Gastrocnemius medialis (tissue), 4 donors: ENCODE measurements at regions of chr19 and their contacts with region 1.

Region 1: DNA sequence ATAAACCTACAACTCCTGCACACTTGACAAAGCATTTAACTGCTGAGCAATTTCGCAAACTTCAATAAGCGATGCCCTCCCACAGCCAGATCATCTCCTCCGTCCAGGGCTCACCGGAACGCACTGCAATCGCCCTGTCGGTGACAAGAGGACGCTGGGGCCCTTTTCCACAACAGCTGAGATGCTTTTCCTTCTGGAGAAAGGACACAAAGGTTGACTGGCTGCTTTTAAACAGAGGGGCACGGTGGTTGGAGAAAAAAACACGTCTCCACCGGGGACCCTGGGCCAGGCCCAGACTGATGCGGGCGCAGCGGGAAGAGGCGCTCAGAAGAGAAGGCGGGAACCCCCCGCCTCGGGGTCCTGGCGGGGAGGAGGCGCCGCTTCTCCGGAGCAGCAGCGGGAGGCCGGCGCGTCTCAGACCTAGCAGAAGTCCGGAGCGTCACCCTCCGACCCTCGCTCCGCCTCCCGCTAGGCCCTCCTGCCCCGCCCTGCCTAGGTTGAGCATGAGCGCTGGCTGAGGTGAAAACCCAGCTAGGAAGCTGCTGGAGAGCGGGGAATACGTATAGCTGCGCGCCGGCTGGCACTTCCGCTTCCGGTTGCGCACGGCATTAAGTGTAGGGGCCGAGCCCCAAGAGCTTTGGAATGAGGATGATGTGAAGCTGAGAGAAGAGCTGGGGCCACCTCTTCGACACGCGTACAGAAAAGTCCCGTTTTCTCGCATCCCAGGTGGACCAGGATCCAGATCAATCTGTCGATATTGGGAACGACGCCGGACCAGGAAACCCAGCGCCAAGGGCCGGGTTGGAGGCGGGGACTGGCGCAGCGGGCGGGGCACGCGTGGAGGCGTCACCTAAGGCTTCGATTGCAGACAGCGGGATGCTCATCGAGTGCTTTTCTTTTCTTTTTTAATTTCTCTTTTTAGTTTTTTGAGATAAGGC is at the start of gene ZNF846:
- DNase-seq: peak; percentile 78 to 87
- ATAC-seq: peak; percentile 99 to 100
- H3K4me3 ChIP-seq: peak within 1 kb of the TSS; percentile 59 to 92 (median 88)
- H3K27ac ChIP-seq: peak within 1 kb of the TSS; percentile 85 to 91 (median 91)
- H3K4me1 ChIP-seq: peaks cover 7 to 12% of the 10 kb centered on the region in 2 donors
- H3K27me3 ChIP-seq: no peaks in the 10 kb centered on the region
- CTCF ChIP-seq: no peak
- POLR2A ChIP-seq: peak; percentile 29 to 42
- total RNA-seq, gene ZNF846: 0.63 to 5.0 (median 2.1) TPM

Region 2: DNA sequence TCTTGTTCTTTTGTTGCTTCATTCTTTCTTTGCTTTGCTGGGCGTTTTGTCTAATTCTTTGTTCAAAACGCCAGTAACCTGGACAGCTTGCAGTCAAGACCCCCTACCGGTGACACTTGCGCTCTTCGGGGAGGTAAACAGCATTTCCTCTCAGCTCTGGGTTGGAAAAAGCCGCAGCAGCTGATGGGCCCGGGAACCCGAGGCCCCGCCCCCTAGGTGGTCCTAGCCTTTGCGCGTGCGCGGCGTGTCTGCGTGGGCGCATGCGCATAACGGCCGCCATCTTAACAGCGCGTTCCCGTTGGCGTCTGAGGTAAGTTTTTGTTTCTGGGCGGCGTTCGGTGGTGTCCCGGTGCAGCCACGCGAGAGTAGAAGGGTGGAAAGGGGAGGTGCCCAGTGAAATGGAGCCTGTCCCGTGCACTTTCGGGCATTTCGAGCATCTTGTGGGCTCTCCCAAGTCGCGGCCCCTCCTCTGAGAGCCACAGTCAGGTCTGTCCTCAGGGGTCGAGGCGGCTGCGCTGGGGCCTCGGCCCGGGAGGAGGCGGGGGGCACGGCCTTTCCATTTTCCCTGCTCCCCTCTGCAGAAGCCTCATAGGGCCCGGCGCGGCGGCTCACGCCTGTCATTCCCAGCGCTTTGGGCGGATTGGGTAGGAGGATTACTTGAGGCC is 444.4 kb before region 1 on chr19 and contains the start of gene ZNF559:
- in situ Hi-C with region 1: no loop called
- intact Hi-C with region 1: loop called (anchors 10 kb)
- DNase-seq: peak; percentile 60 to 78
- ATAC-seq: peak; percentile 76 to 95
- H3K4me3 ChIP-seq: peak within 1 kb of the TSS; percentile 64 to 80 (median 70)
- H3K27ac ChIP-seq: peak within 1 kb of the TSS; percentile 72 to 79 (median 78)
- H3K4me1 ChIP-seq: peaks cover 0 to 6% of the 10 kb centered on the region in 2 donors
- H3K27me3 ChIP-seq: no peaks in the 10 kb centered on the region
- CTCF ChIP-seq: peak in 2 of 5 experiments; percentile 21 to 26
- POLR2A ChIP-seq: no peak
- total RNA-seq, gene ZNF559: 1.4 to 3.8 (median 3.0) TPM

Region 3: DNA sequence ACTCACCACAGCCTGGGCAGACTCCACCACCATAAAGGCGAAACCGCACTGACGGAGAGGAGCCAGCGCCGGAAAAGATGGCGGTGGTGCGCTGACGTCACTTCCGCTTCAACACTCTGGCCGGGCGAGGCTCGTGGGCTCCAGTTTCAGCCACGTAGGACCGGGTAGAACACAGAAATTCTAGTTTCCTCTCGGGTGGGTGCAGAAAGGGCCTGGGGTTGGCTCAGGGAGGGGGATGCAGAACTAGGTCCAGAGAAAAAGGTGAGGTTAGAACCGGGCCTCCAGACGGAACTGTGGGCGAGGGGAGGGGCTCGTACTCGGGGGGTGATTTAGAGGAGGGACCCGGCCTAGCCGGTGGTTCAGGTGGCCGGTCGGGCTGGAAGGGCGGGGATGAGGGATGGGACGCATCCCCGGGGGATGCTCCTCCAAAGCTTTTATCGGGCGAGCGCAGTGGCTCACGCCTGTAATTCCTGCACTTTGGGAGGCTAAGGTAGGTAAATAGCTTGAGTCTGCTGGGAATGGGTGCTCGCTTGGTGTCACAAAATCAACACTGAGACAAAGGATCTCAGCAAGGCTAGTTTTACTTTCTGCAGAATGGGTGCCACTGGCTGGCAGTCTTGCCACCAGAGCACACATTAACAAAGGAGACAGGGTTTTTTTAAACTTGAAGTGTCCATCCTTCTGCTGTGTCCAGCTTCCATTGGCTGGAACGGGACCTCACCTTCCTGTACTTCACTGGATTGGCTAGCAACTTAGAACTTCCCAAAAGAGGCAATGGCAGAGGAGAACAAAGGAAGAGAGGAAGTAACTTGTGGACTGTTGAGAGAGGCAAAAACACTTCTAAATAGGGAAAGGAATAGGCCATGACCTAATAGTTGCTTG is 147.0 kb before region 1 on chr19 and contains the start of gene ZNF561:
- in situ Hi-C with region 1: loop called in 2 of 4 experiments (anchors 10 to 25 kb)
- intact Hi-C with region 1: loop called (anchors 1 kb)
- DNase-seq: peak; percentile 70
- ATAC-seq: peak; percentile 96 to 98
- H3K4me3 ChIP-seq: peak within 1 kb of the TSS; percentile 70 to 96 (median 86)
- H3K27ac ChIP-seq: peak within 1 kb of the TSS; percentile 82 to 92 (median 90)
- H3K4me1 ChIP-seq: peaks cover 14 to 22% of the 10 kb centered on the region in 2 donors
- H3K27me3 ChIP-seq: no peaks in the 10 kb centered on the region
- CTCF ChIP-seq: no peak
- POLR2A ChIP-seq: no peak
- total RNA-seq, gene ZNF561: 8.7 to 17.5 (median 14.4) TPM

Region 4: DNA sequence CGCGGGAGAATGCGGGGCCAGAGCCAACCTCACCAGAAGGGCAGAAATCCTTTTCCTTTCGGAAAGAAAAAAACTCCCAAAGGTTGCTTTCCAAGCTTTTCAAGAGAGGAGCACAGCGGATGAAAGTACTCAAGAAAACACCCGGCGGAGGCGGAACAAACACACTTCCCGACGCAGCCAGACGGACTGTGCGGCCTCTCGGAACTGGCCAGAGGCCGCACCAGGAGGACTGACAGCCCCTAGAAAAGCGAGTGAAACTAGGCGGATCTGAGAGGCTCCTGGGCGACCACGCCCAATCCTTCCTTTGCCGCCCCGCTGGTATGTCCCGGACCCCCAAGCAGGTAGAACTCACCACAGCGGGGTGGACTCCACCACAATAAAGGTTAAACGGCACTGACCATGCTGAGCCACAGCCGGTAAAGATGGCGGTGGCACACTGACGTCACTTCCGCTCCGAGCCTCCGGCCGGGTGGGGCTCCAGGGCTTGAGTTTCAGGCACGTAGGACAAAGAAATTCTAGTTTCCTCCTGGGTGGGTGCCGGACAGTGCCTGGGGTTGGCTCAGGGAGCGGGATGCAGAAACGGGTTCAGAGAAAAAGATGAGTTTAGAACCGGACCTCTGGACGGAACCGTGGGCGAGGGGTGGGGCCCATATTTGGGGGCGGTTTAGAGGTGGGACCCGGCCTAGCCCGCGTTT is 93.6 kb before region 1 on chr19 and contains the start of gene ZNF562:
- in situ Hi-C with region 1: no loop called
- intact Hi-C with region 1: loop called (anchors 1 kb)
- DNase-seq: peak; percentile 36 to 57
- ATAC-seq: peak; percentile 84 to 92
- H3K4me3 ChIP-seq: peak within 1 kb of the TSS; percentile 66 to 90 (median 70)
- H3K27ac ChIP-seq: peak within 1 kb of the TSS; percentile 81 to 88 (median 86)
- H3K4me1 ChIP-seq: no peaks in the 10 kb centered on the region
- H3K27me3 ChIP-seq: no peaks in the 10 kb centered on the region
- CTCF ChIP-seq: no peak
- POLR2A ChIP-seq: peak in 1 of 2 donors; percentile 34
- total RNA-seq, gene ZNF562: 3.0 to 8.1 (median 6.6) TPM

Region 5: DNA sequence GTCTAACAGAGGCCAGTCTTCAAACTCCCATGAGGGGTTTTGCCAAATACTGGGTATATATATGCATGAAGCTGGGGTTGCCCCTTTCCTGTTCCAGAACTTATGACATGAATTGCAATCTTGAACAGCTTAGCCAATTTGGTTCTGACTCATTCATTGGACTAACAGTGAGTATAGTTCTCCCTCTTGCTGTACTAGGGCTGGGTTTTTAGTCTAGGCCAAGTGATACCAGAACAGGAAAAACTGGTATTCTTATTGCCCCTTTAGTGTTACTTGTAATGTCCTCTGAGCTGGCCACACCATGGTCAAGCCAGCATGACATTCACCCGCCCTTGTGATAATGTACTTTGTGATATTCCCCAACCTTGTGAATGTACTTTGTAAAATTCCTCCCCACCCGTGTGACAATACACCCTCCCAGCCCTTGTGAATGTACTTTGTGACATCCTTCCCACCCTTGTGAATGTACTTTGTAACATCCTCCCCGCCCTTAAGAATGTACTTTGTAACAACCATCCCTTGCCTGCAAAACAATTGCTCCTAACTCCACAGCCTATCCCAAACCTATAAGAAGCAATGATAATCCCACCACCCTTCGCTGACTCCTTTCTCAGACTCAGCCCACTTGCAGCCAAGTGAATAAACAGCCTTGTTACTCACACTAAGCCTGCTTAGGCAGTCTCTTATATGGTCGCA is 26.8 kb before region 1 on chr19:
- in situ Hi-C with region 1: no loop called
- intact Hi-C with region 1: no loop called
- DNase-seq: no peak
- ATAC-seq: no peak
- H3K4me3 ChIP-seq: no peak overlapping the region
- H3K27ac ChIP-seq: no peak overlapping the region
- H3K4me1 ChIP-seq: no peaks in the 10 kb centered on the region
- H3K27me3 ChIP-seq: no peaks in the 10 kb centered on the region
- CTCF ChIP-seq: no peak
- POLR2A ChIP-seq: no peak

Region 6: DNA sequence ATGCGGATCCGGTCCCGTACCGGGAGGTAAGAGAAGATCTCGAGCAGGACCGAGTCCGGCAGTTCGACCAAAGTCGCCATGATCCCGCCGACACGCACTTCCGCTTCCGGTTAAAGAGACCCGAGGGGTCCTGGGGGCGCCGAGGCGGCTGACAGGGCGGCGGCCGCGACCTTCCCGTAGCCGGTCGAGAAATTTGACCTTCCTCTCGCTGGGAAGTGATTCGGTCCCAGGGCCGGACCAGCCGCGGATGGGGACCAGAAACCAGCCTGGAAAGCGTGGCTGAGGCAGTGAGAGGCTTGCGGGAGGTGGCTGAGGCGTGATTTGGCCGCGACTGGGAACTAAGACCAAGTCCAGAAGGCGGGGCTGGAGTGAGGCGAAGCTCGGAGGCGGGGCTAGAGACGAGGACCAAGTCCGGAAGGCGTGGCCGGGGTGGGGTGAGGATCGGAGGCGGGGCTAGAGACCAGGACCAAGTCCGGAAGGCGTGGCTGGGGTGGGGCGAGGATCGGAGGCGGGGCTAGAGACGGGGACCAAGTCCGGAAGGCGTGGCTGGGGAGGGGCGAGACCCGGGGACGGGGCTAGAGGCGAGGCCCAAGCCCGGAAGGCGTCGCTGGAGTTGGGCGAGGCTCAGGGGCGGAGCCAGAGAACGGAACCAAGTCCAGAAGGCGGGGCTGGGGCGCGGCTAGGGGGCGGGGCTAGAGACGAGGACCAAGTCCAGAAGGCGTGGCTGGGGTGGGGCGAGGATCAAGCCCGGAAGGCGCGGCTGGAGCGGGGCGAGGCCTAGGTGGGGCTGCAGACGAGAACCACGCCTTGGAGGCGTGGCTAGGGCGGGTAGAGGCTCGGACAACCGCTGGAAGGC is 50.5 kb after region 1 on chr19 and contains the start of gene FBXL12:
- in situ Hi-C with region 1: no loop called
- intact Hi-C with region 1: loop called (anchors 2 kb)
- DNase-seq: peak; percentile 100
- ATAC-seq: peak; percentile 88 to 91
- H3K4me3 ChIP-seq: peak within 1 kb of the TSS; percentile 93 to 100 (median 95)
- H3K27ac ChIP-seq: peak within 1 kb of the TSS; percentile 91 to 100 (median 98)
- H3K4me1 ChIP-seq: peaks cover 10 to 23% of the 10 kb centered on the region in 2 donors
- H3K27me3 ChIP-seq: no peaks in the 10 kb centered on the region
- CTCF ChIP-seq: no peak
- POLR2A ChIP-seq: peak; percentile 71 to 79
- total RNA-seq, gene FBXL12: 7.6 to 28.4 (median 15.1) TPM